ENCODE measurements at regions of chr10 and their contacts with region 1.

Region 1: GRCh38 chr10:97425964-97426775 is at the start of gene PGAM1:
- DNase-seq: peak; percentile 96
- H3K4me3 Mint-ChIP-seq: peak within 1 kb of the TSS; percentile 86
- H3K27ac Mint-ChIP-seq: peak within 1 kb of the TSS; percentile 98
- H3K4me1 Mint-ChIP-seq: peaks cover 34% of the 10 kb centered on the region
- H3K27me3 Mint-ChIP-seq: no peaks in the 10 kb centered on the region
- total RNA-seq, gene PGAM1: 877 and 885 TPM in 2 replicates

Region 2: GRCh38 chr10:97400665-97401454 is 25.3 kb before region 1 on chr10 and contains the start of gene RRP12:
- intact Hi-C with region 1: loop called (anchors 1 kb)
- DNase-seq: peak; percentile 87
- H3K4me3 Mint-ChIP-seq: peak within 1 kb of the TSS; percentile 97
- H3K27ac Mint-ChIP-seq: peak within 1 kb of the TSS; percentile 89
- H3K4me1 Mint-ChIP-seq: peaks cover 11% of the 10 kb centered on the region
- H3K27me3 Mint-ChIP-seq: no peaks in the 10 kb centered on the region
- total RNA-seq, gene RRP12: 69.8 and 70.1 TPM in 2 replicates

Region 3: DNA sequence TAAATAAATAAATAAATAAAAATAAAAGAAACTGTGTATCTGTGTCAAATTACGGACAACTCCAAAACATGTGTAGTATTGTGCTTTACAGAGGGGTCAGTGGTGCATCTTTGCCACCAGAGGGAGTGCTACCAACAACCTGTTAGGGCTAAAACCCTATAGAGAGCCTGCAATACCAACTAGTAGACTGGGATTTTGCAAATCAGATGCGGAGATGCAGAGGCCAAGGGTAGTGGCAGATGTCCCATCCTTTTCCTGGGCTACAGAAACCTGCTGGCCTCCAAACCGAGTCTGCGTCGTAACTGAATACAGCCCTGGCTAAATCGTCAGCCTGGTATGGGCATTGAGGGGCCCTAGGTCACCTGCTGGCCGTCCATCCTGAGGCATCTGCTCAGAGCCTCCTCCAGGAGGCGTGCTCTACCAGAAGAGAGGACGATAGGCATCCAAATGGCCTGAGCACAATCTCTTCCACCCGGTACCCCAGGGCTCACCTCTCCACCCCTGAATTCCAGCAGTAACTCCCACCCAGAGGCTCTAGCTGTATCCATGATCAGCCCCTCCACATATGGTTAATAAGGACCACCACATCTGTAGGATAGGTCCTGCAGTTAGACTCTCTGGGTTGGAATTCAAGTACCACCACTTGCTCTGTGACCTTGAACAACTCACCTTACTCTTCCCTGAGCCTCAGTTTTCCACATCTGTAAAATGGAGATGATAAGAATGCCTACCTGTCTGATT is 18.8 kb before region 1 on chr10:
- intact Hi-C with region 1: loop called (anchors 1 kb)
- DNase-seq: peak; percentile 57
- H3K4me3 Mint-ChIP-seq: peak overlapping the region; percentile 13
- H3K27ac Mint-ChIP-seq: peak overlapping the region; percentile 61
- H3K4me1 Mint-ChIP-seq: peaks cover 16% of the 10 kb centered on the region
- H3K27me3 Mint-ChIP-seq: no peaks in the 10 kb centered on the region

Region 4: GRCh38 chr10:97412891-97413304 is 13.3 kb before region 1 on chr10:
- intact Hi-C with region 1: loop called (anchors 1 kb)
- DNase-seq: peak; percentile 43
- H3K4me3 Mint-ChIP-seq: peak overlapping the region; percentile 53
- H3K27ac Mint-ChIP-seq: peak overlapping the region; percentile 91
- H3K4me1 Mint-ChIP-seq: peaks cover 48% of the 10 kb centered on the region
- H3K27me3 Mint-ChIP-seq: no peaks in the 10 kb centered on the region

Region 5: DNA sequence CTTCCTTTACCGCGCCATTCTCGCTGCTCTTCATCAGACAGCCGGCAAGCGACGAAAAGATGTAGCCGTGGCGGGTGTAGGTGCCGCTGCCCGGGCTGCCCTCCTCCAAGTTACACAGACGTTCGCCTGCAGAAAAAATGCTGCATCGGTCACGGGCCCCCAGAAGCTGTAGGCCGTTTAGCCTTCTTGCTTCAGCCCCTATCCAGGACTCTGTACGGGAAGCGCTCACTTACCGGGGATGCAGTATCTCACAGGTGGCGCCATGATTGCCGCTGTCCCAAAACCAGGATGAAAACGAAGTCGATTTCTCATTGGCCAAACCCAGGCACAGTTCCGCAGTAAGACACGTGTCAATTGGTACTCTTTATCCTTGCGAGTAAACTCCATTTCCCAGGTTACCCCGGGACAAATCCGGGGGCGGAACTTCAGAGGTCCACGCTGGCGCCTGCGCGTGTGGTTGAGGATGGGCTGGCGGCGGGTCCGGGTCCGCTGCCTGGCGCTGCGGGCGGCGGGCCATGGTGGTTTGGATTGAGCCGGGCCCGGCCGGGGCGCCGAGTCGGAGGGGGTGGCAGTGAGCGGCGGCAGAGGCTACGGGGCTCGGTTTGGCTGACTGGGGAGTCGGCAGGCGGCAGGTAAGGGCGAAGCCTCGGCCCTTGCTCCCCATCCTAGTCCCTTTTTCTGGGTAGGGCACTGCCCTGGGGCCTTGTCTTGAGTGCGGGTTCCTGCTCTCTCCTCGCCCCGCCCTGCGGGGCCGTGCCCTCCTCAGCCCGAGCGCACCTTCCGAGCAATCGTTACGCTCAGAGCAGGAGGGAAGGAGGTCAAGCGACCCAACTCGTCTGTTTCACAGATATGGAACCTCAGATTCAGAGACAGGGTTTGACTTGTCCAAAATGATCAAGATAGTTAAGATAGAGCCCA is 19.8 kb after region 1 on chr10 and contains the starts of genes EXOSC1 and ZDHHC16:
- intact Hi-C with region 1: loop called (anchors 1 kb)
- DNase-seq: peak; percentile 92
- H3K4me3 Mint-ChIP-seq: peak within 1 kb of the TSS; percentile 95
- H3K27ac Mint-ChIP-seq: peak within 1 kb of the TSS; percentile 69
- H3K4me1 Mint-ChIP-seq: peaks cover 34% of the 10 kb centered on the region
- H3K27me3 Mint-ChIP-seq: no peaks in the 10 kb centered on the region
- total RNA-seq, gene EXOSC1: 49.9 and 53.4 TPM in 2 replicates
- total RNA-seq, gene ZDHHC16: 41.4 and 52.9 TPM in 2 replicates

Region 6: DNA sequence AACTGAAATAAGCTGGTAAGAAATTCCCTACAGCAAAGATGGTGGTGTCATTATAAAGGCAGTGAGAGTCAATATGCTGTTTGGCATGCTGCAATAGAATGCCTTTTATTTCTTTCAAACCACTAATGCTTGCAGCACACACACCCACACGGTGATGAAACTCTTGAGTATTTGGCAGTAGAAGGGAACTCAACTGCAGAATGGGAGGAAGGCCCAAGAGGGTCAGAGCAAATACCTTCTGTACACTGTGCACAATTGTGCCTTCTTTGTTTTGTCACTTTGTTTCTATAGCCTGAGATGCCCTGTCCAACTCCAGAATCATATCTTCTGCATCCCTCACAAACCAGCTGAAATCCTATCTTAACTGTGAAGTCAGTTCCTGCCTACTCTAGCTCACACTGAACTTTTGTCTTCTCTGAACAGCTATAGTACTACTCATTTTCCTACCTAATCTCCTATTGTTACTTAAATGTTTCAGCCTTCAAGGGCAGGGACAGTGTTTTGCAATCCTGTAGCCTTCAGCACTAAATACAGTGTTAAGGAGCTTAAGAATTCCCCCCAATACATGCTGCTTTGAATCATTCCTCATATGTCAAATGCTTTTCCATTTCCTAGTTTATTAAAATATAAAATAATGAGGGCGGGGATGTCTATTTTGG is 49.9 kb after region 1 on chr10:
- intact Hi-C with region 1: no loop called
- DNase-seq: no peak
- H3K4me3 Mint-ChIP-seq: no peak overlapping the region
- H3K27ac Mint-ChIP-seq: no peak overlapping the region
- H3K4me1 Mint-ChIP-seq: peaks cover 2% of the 10 kb centered on the region
- H3K27me3 Mint-ChIP-seq: no peaks in the 10 kb centered on the region

Region 7: GRCh38 chr10:97640174-97640867 is 214.2 kb after region 1 on chr10 and contains the start of gene PI4K2A:
- intact Hi-C with region 1: loop called (anchors 10 kb)
- DNase-seq: peak; percentile 99
- H3K4me3 Mint-ChIP-seq: peak within 1 kb of the TSS; percentile 92
- H3K27ac Mint-ChIP-seq: peak within 1 kb of the TSS; percentile 84
- H3K4me1 Mint-ChIP-seq: peaks cover 19% of the 10 kb centered on the region
- H3K27me3 Mint-ChIP-seq: no peaks in the 10 kb centered on the region
- total RNA-seq, gene PI4K2A: 15.8 and 17.4 TPM in 2 replicates